ENCODE measurements at regions of chr13 and their contacts with region 1.

Region 1: DNA sequence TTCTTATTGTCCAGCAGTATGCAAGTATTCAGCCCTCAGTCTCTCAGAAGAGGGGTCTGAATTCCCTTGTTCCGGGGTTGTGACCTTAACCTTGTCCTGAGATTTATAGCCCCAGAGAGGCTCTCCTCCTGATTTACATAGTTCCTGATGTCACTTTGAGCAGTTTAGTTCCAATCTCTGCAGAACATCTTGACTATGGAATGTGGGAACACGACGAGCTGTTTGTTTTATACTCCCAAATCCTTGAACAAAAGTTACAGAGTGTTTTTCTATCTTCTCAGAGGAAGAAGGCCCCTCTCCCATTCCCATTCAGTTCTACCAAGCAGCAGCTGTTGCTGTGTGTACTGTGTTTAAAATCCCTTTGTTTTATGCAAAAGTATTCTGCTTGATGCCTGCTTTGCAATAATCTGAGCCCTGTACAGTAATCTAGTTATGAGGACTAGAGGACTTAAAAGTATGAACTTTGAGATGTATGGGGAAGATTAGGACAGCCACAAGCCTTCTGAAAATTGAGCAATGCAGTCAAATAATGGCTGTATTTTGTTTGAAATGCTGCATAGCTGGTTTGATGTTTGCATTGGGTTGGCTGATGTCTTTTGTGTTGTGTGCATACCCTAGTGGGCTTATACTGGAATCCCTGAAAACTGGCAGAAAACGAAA is 74.7 kb downstream of the KL start:
- DNase-seq: peak; percentile 83
- H3K4me3 ChIP-seq: no peak overlapping the region
- H3K27ac ChIP-seq: peak overlapping the region; percentile 53
- H3K4me1 ChIP-seq: peaks cover 42% of the 10 kb centered on the region
- H3K27me3 ChIP-seq: no peaks in the 10 kb centered on the region
- CTCF ChIP-seq: no peak
- POLR2A ChIP-seq: no peak

Region 2: GRCh38 chr13:31793246-31793645 is 1297.6 kb before region 1 on chr13:
- CTCF ChIA-PET with region 1: no interaction called
- POLR2A ChIA-PET with region 1: no interaction called
- dilution Hi-C with region 1: no loop called
- intact Hi-C with region 1: no loop called
- DNase-seq: peak; percentile 76
- H3K4me3 ChIP-seq: peak overlapping the region in 1 of 3 experiments; percentile 22
- H3K27ac ChIP-seq: peak overlapping the region; percentile 70
- H3K4me1 ChIP-seq: peaks cover 26% of the 10 kb centered on the region
- H3K27me3 ChIP-seq: no peaks in the 10 kb centered on the region
- CTCF ChIP-seq: no peak
- POLR2A ChIP-seq: peak; percentile 31

Region 3: GRCh38 chr13:33194820-33195692 is 104.2 kb after region 1 on chr13:
- CTCF ChIA-PET with region 1: no interaction called
- POLR2A ChIA-PET with region 1: no interaction called
- dilution Hi-C with region 1: no loop called
- intact Hi-C with region 1: loop called (anchors 5 kb)
- DNase-seq: peak; percentile 86
- H3K4me3 ChIP-seq: no peak overlapping the region
- H3K27ac ChIP-seq: peak overlapping the region; percentile 87
- H3K4me1 ChIP-seq: peaks cover 39% of the 10 kb centered on the region
- H3K27me3 ChIP-seq: no peaks in the 10 kb centered on the region
- CTCF ChIP-seq: no peak
- POLR2A ChIP-seq: no peak

Measured in endothelial cell of umbilical vein (primary cell).